ENCODE measurements at regions of chr12 and their contacts with region 1.

Region 1: DNA sequence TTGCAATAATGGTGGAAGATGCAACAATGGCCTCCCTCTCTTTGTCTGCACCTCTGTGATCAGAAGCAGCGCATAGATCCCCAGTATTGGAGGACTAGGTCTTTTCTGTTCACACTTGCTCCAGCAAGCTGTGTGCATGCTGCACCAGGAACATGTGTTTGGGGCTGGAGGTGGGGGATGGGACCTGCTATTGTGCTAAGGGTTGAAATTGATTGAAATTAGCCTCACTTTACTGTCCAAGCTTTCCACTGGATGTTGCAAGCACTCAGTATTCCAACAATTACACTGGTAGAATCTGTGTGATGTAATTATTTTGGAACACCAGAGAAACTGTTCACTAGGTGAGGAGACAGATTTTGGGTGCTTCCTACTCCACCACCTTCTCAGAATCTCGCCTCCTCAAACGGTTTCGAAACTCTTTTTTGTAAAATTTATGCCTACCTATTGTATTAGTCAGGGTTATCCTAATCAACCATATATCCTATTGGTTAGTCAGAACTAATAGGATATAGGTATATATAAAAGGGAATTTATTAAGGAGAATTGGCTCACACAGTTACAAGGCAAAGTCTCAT is 35.6 kb downstream of the IFT81 start:
- DNase-seq: no peak
- H3K4me3 Mint-ChIP-seq: no peak overlapping the region
- H3K27ac Mint-ChIP-seq: no peak overlapping the region
- H3K4me1 Mint-ChIP-seq: peaks cover 13% of the 10 kb centered on the region
- H3K27me3 Mint-ChIP-seq: peaks cover under 1% of the 10 kb centered on the region

Region 2: GRCh38 chr12:110141389-110141788 is 18.4 kb before region 1 on chr12:
- intact Hi-C with region 1: loop called (anchors 1 kb)
- DNase-seq: no peak
- H3K4me3 Mint-ChIP-seq: no peak overlapping the region
- H3K27ac Mint-ChIP-seq: no peak overlapping the region
- H3K4me1 Mint-ChIP-seq: no peaks in the 10 kb centered on the region
- H3K27me3 Mint-ChIP-seq: no peaks in the 10 kb centered on the region